Breast epithelium (tissue), 4 donors: ENCODE measurements at regions of chr15 and their contacts with region 1.

Region 1: DNA sequence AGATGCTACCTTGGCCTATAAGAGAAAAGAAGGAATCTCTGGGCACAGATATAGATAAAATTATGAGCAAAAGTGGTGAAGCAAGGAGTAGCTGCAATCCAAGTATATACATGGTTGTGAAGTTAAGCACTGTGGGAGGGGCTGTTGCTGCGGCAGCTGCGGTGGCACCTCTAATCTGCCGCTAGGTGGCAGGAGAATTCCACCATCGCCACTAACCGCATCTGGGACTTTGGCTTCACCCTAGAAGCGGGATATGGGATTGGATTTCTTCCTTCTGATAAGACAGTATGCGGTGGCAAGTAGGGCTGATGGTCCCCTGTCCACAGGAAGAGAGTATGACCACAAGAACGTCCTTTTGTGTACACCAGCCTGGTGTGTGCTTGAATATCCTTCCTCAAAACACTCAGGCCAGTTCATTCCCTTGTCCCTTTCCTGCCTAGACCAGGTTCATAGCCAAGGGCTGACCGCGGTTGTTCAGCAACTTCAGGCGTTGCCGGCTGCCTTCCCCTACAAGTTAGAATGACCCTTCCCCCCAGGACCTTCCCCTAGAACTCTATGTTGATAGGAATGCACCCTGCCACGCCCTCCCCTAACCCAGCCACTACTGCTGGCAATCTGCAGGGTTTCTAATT is 5.1 kb downstream of the MAGEL2 start:
- DNase-seq: no peak
- H3K4me3 ChIP-seq: no peak overlapping the region
- H3K27ac ChIP-seq: no peak overlapping the region
- H3K4me1 ChIP-seq: no peaks in the 10 kb centered on the region
- H3K27me3 ChIP-seq: peaks cover 0 to 16% of the 10 kb centered on the region in 2 donors
- CTCF ChIP-seq: peak in 2 of 3 donors; percentile 54 to 75
- POLR2A ChIP-seq: no peak

Region 2: DNA sequence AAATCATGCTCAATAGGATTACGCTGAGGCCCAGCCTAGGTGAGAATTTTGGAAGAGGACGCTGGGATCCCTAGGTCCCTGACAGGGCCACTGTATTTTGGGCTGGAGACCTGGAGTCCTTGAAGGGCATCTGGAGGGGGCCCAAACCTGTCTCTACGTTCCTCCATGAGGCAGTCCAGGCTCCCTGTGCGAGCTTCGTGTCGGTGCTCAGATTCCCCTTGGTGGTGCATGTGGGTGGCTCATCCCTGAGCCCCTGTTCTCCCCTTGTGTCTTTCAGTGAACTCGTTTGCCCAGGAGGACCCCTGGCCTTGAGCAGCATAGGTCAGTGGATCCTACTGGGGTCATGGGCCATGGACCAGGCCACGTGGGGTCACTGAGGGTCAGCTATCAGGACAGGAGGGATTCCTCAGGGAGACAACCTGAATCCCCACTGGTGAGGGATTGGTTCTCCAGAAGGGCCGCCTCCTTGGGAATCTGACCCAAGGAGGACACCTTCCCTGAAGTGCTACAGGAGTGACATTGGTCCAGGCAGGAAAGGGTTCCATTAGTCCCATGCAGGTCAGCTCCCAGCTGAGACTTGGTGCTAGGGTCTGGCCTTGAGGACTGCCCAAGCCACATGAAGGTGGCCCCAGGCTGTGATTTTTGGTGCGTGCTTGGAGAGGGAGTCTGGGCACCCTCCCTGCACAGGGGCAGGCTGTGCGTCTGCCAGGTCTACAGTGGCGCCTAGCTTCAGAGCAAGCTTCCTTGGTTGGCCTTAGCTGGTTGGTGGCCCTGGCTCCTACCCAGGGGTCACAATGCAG is 1542.0 kb after region 1 on chr15:
- intact Hi-C with region 1: loop called (anchors 5 kb)
- DNase-seq: peak in 1 of 2 donors; percentile 5
- H3K4me3 ChIP-seq: no peak overlapping the region
- H3K27ac ChIP-seq: no peak overlapping the region
- H3K4me1 ChIP-seq: no peaks in the 10 kb centered on the region
- H3K27me3 ChIP-seq: no peaks in the 10 kb centered on the region
- CTCF ChIP-seq: no peak
- POLR2A ChIP-seq: no peak